Left lung (tissue), 14 donors: ENCODE measurements at regions of chr16 and their contacts with region 1.

Region 1: DNA sequence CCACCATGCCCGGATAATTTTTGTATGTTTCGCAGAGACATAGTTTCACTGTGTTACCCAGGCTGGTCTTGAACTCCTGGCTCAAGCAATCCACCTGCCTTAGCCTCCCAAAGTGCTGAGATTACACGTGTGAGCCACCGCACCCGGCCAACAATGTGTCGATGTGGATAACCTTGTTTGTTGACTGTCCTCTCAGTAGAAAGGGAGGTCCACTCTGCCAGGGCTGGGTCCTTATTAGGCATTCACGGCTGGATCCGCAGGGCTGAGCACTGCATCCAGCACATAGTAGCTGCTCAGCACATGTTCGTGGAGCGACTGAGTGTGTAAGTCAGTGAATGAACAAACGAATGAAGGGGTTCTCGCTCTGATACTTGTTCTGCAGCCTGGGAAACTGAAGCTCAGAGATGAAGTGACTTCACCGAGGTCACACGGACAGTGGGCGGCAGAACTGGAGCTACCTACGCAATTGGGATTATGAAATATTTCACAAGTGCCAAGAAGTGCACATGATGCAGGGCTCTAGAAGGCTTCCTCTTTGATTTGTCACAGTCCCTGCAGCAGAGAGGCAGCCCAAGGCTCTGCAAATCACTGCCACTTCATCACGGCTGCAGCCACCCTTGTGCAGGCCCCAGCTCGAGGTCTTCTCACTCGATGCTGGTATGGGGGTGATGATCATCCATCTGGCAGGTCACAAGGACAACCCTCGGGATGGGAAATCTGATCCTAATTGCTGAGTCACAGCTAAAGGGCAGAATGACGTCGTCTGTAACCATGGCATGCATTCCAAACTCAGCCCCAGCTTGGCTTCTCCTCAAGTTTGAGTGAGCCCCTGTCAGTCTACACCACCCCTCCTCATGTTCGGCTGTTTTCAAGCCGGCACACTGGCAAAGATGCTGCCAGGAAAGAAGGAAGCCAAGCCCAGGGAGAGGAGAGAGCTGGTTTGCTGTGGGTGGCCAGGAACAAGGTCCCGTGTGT is 28.0 kb upstream of the SNN start:
- DNase-seq: peak; percentile 86 to 97 (median 94)
- ATAC-seq: peak; percentile 84
- H3K4me3 ChIP-seq: no peak overlapping the region
- H3K27ac ChIP-seq: peak overlapping the region; percentile 92 to 94
- H3K4me1 ChIP-seq: peaks cover 10 to 38% of the 10 kb centered on the region in 2 donors
- H3K27me3 ChIP-seq: no peaks in the 10 kb centered on the region
- CTCF ChIP-seq: no peak

Region 2: DNA sequence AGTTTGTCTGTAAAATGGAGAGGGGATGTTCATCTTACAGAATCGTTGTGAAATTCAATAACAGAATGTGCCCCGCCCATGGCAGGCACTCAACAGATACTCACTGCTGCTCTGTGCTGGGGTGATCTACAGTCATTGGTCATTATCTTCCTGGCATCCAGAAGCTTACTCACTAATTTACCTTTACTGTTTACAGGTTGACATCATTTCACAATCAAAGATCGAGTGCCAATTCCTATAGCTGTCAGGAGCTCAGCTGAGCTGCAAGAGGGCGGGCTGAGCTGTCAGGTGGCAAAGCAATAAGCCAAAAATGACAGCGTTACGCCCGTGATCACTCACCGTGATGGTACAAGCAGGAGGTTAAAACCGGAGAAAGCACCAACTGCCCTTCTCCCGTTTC is 104.7 kb before region 1 on chr16:
- intact Hi-C with region 1: loop called in 1 of 2 experiments (anchors 5 kb)
- DNase-seq: no peak
- ATAC-seq: no peak
- H3K4me3 ChIP-seq: no peak overlapping the region
- H3K27ac ChIP-seq: no peak overlapping the region
- H3K4me1 ChIP-seq: peaks cover 0 to 4% of the 10 kb centered on the region in 2 donors
- H3K27me3 ChIP-seq: no peaks in the 10 kb centered on the region
- CTCF ChIP-seq: no peak

Region 3: DNA sequence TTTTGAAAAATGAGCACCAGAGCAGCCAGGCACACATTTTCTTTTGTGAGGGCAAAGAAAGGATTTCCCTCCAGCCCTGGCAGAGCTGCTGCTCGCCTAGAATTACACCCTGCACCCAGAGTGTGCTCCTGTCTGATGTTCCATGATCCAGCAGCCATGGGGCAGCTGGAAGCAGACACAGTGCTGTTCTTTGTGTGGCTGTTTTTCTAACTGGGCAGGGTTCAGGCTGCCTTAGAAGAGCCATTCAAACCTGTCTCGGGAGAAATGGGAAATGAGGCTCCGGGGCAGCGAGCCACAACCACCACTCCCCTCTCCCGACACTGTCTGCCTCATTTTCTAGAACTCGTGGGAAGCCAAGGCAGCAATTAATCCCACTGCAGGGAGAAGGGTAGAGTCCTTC is 82.4 kb before region 1 on chr16:
- intact Hi-C with region 1: no loop called
- DNase-seq: no peak
- ATAC-seq: peak; percentile 11
- H3K4me3 ChIP-seq: no peak overlapping the region
- H3K27ac ChIP-seq: peak overlapping the region in 1 of 2 donors; percentile 5
- H3K4me1 ChIP-seq: peaks cover 0 to 61% of the 10 kb centered on the region in 2 donors
- H3K27me3 ChIP-seq: no peaks in the 10 kb centered on the region
- CTCF ChIP-seq: no peak